Activated naive CD4-positive, alpha-beta T cell treated with anti-CD3 and anti-CD28 coated beads for 36 hours (primary cell): ENCODE measurements at regions of chr14 and their contacts with region 1.

Region 1: DNA sequence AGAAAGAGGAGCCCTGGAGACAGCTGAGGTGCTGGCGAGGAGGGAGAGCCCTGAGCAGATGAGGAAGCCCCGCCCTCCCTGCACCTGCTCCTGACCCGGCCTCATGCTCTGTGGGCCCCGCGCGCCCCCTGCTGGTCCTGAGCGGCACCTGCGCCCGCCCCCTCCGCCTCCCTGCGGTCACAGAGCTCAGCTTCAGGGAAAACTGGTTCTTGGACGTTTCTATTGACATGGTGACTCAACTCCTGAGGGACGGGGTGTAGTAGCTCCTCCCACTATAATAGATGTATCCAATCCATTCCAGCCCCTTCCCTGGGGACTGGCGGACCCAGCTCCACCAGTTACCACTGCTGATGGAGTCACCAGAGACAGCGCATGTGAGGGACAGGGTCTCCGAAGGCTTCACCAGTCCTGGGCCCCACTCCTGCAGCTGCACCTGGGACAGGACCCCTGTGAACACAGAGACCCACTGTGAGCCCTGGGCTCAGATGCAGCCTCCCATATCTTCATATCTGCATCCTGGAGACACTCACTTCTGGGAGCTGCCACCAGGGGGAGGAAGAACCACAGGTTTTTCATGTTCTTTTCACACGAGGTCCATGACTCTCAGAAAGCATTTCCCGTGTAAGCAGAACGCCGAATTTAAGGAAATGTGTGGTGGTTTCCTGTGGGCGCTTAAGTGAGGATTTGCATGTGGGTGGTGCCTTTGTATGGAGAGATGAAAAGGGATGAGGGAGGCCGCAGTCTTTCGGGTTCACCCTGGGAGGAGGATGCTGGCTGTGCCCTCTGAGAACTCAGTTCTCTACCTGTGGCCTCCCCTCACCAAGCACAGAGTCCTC is 1346.4 kb downstream of the TMEM121 start:
- DNase-seq: peak; percentile 94
- H3K4me3 Mint-ChIP-seq: peak overlapping the region; percentile 61
- H3K27ac Mint-ChIP-seq: no peak overlapping the region
- H3K4me1 Mint-ChIP-seq: peaks cover 10% of the 10 kb centered on the region
- H3K27me3 Mint-ChIP-seq: peaks cover 39% of the 10 kb centered on the region

Region 2: DNA sequence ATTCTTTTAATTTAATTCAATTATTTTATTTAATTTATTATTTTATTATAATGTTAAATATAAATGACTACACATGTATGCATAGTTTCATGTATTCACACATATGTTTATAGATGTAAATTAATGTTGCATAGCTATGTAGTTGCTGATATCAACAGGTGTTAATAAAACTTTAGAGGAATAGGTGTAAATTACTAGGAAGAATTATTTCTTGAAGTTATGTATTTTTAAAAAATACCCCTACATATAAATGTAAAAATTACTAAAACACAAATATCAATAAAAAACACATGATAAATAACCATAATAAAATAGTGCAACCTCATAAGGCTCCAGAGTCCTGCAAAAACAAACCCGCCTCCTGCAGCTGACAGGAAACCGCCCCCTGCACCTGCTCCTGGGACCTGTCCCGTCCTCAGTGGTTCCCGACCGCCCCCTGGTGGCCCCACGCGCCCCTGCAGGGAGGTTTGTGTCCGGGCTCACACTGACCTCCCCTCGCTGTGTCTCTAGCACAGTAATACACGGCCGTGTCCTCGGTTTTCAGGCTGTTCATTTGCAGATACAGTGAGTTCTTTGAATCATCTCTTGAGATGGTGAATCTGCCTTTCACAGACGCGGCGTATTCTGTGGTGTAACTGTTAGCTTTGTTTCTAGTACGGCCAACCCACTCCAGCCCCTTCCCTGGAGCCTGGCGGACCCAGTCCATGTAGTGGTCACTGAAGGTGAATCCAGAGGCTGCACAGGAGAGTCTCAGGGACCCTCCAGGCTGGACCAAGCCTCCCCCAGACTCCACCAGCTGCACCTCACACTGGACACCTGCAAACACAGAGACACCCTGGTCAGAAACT is 82.4 kb before region 1 on chr14:
- CTCF ChIA-PET with region 1: interaction called, 14 read pairs
- intact Hi-C with region 1: no loop called
- DNase-seq: peak; percentile 89
- H3K4me3 Mint-ChIP-seq: no peak overlapping the region
- H3K27ac Mint-ChIP-seq: no peak overlapping the region
- H3K4me1 Mint-ChIP-seq: peaks cover 10% of the 10 kb centered on the region
- H3K27me3 Mint-ChIP-seq: peaks cover 4% of the 10 kb centered on the region

Region 3: GRCh38 chr14:106823552-106823951 is 49.3 kb before region 1 on chr14:
- CTCF ChIA-PET with region 1: interaction called, 14 read pairs
- intact Hi-C with region 1: no loop called
- DNase-seq: no peak
- H3K4me3 Mint-ChIP-seq: no peak overlapping the region
- H3K27ac Mint-ChIP-seq: no peak overlapping the region
- H3K4me1 Mint-ChIP-seq: no peaks in the 10 kb centered on the region
- H3K27me3 Mint-ChIP-seq: peaks cover 6% of the 10 kb centered on the region

Region 4: DNA sequence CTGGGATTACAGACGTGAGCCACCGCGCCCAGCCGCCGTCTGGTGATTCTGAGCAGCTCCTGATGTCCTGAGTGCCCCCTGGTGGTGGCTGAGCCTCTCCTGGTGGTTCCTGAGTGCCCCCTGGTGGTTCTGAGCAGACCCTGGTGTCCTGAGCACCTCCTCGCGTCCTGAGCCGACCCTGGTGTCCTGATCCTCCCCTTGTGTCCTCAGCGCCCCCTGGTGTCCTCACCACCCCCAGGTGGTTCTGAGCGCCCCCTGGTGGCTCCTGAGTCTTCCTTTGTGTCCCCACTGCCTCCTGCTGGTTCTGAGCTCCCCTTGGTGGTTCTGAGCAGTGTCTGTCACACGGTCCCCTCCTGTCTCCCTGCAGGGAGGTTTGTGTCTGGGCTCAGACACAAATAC is 41.5 kb before region 1 on chr14:
- CTCF ChIA-PET with region 1: interaction called, 76 read pairs
- intact Hi-C with region 1: loop called (anchors 2 kb)
- DNase-seq: peak; percentile 75
- H3K4me3 Mint-ChIP-seq: no peak overlapping the region
- H3K27ac Mint-ChIP-seq: no peak overlapping the region
- H3K4me1 Mint-ChIP-seq: no peaks in the 10 kb centered on the region
- H3K27me3 Mint-ChIP-seq: no peaks in the 10 kb centered on the region

Region 5: DNA sequence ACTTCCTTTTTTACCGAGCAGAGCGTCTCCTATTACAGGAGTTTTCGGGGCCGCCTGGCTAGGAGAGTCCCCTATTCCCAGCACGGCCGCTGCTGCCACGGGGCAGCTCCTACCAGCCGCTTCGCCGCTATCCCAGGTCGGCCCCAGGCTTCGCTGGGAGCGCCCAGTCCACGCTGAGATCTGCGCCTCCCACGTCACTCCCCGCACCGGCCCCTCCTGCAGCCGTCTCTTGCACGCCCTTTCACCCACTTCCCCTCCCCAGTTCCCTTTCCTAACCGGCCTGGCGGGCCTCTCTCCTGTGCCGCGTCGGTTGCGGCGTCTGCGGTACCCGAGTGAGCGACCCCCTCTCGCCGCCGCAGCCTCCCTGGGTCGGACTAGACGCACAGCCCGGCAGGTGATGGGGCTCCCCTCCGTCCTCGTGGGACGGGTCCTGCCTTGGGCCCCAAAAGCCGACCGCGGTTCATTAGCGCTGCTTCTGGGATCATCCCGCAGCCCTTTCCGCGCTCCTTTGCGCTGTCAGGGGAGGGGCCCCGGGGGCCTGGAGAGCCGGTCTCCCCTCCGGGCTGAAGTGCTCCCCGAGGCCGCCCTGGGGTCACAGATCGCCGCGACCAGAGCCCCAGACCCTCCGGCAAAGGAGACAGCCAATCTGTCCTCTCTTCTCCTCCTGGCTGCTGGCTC is 28.1 kb before region 1 on chr14:
- CTCF ChIA-PET with region 1: interaction called, 76 read pairs
- intact Hi-C with region 1: loop called (anchors 1 kb)
- DNase-seq: peak; percentile 72
- H3K4me3 Mint-ChIP-seq: peak overlapping the region; percentile 86
- H3K27ac Mint-ChIP-seq: peak overlapping the region; percentile 76
- H3K4me1 Mint-ChIP-seq: peaks cover 26% of the 10 kb centered on the region
- H3K27me3 Mint-ChIP-seq: no peaks in the 10 kb centered on the region

Region 6: DNA sequence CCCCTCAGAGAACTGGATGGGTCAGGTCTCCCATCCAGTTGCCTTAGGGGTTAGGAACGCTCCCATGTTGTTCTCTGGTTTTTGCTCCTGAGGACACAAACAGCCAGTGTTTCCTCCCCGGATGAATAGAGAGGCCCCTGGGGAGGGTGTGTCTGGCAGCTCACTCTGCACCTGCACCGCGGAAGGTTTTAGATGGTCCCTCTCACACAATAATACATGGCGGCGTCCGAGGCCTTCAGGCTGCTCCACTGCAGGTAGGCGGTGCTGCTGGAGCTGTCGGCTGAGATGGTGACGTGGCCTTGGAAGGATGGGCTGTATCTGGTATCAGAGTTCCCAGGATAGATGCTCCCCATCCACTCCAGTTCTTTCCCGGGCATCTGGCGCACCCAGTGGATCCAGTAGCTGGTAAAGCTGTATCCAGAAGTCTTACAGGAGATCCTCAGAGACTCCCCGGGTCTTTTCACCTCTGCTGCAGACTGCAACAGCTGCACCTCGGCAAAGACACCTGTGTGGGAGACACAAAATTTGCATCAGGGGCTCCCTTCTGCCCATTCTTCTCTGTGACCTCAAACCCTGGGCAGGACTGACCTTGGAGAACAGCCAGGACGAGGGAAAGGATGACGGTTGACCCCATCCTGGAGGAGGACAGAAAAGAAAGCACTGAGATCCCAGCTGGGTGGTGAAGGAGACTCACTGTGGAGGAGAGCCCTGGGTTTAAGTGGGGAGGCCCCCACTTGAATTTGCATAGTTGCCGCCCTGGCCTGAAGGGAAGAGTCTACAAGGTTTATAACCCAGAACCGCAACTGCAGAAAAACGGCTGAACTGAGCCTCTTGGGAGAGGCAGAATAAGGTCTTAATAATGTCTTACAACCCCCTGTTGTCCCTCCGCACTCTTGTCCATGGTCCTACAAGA is 21.7 kb before region 1 on chr14:
- CTCF ChIA-PET with region 1: interaction called, 36 read pairs
- intact Hi-C with region 1: no loop called
- DNase-seq: no peak
- H3K4me3 Mint-ChIP-seq: no peak overlapping the region
- H3K27ac Mint-ChIP-seq: no peak overlapping the region
- H3K4me1 Mint-ChIP-seq: peaks cover 11% of the 10 kb centered on the region
- H3K27me3 Mint-ChIP-seq: no peaks in the 10 kb centered on the region

Region 7: GRCh38 chr14:106883218-106883692 is 10.4 kb after region 1 on chr14:
- CTCF ChIA-PET with region 1: interaction called, 24 read pairs
- intact Hi-C with region 1: no loop called
- DNase-seq: peak; percentile 66
- H3K4me3 Mint-ChIP-seq: no peak overlapping the region
- H3K27ac Mint-ChIP-seq: no peak overlapping the region
- H3K4me1 Mint-ChIP-seq: no peaks in the 10 kb centered on the region
- H3K27me3 Mint-ChIP-seq: peaks cover 7% of the 10 kb centered on the region